PC-3 (cell line): ENCODE measurements at regions of chr16 and their contacts with region 1.

Region 1: GRCh38 chr16:21341101-21341500 is 63.0 kb upstream of the CRYM start:
- DNase-seq: no peak
- ATAC-seq: no peak
- H3K4me3 ChIP-seq: no peak overlapping the region
- H3K27ac ChIP-seq: no peak overlapping the region
- H3K4me1 ChIP-seq: no peaks in the 10 kb centered on the region
- H3K27me3 ChIP-seq: no peaks in the 10 kb centered on the region
- CTCF ChIP-seq: no peak

Region 2: GRCh38 chr16:21233521-21234150 is 107.5 kb before region 1 on chr16 and contains the start of gene ANKS4B:
- CTCF ChIA-PET with region 1: no interaction called
- POLR2A ChIA-PET with region 1: no interaction called
- intact Hi-C with region 1: no loop called
- DNase-seq: no peak
- ATAC-seq: no peak
- H3K4me3 ChIP-seq: no peak within 1 kb of the TSS
- H3K27ac ChIP-seq: no peak within 1 kb of the TSS
- H3K4me1 ChIP-seq: no peaks in the 10 kb centered on the region
- H3K27me3 ChIP-seq: peaks cover 49% of the 10 kb centered on the region
- CTCF ChIP-seq: no peak
- total RNA-seq, gene ANKS4B: not detected in 2 replicates

Region 3: GRCh38 chr16:21326459-21326858 is 14.6 kb before region 1 on chr16:
- CTCF ChIA-PET with region 1: interaction called, 10 read pairs
- POLR2A ChIA-PET with region 1: no interaction called
- intact Hi-C with region 1: no loop called
- DNase-seq: no peak
- ATAC-seq: no peak
- H3K4me3 ChIP-seq: no peak overlapping the region
- H3K27ac ChIP-seq: no peak overlapping the region
- H3K4me1 ChIP-seq: no peaks in the 10 kb centered on the region
- H3K27me3 ChIP-seq: no peaks in the 10 kb centered on the region
- CTCF ChIP-seq: no peak